AG04449 (cell line): ENCODE measurements at regions of chr1 and their contacts with region 1.

Region 1: DNA sequence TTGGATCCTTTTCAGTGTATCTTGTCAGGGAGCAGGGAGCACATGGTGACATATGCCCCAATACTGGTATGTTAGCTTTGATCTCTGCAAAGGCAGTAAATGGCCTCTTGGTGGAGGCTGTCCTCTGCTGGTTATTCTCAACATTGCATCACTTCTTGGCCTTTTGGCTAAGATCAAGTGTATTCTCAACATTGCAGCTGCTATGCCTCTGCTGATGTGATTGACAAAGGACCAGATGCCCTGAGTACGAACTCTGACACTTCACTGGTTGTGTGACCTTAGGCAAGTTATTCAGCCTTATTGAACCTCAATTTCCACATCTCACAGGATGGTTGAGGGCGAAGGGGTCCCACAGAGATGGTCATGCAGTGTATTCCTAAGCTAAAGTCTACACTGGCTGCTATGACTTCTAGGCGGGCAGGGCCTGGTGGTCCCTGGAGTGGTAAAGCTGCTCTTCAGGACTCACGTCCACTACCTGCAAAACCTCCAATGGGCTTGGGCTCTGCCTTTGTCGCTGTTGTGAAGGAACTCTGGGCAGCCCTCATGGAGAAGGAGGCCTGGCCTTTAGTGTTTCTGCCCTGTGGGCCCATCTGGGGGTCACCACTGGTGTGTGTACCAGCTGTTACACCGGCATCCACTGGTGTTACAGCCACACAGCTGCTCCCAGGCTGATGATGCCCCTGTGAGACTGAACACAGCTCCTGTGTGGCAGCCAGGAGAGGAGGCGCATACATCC is 64.8 kb downstream of the DNTTIP2 start:
- DNase-seq: no peak
- H3K4me3 ChIP-seq: no peak overlapping the region
- CTCF ChIP-seq: peak; percentile 93

Region 2: DNA sequence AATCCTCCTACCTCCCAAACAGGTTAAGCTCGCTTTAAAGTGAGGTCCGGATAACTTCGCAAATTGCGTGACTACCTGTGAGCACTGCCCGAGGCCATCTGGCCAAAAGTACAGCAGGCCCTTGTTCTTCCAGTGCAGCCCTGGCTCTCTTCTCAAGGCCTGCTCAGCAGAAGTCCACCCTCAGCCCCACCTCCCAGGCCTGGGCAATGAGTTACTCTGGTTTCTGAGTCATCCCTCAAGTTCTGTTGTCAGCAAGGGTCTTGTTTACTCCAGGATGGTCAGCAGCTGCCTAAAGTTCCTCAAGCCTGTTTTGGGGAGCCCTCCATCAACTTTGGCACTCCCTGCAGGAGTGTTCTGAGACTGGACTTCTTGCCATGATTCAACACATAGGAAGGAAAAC is 234.3 kb before region 1 on chr1:
- CTCF ChIA-PET with region 1: interaction called, 13 read pairs
- POLR2A ChIA-PET with region 1: no interaction called
- DNase-seq: peak; percentile 64
- H3K4me3 ChIP-seq: no peak overlapping the region
- CTCF ChIP-seq: no peak

Region 3: GRCh38 chr1:93629099-93630059 is 184.8 kb before region 1 on chr1:
- CTCF ChIA-PET with region 1: interaction called, 437 read pairs
- POLR2A ChIA-PET with region 1: interaction called, 3 read pairs
- DNase-seq: no peak
- H3K4me3 ChIP-seq: no peak overlapping the region
- CTCF ChIP-seq: peak; percentile 70

Region 4: DNA sequence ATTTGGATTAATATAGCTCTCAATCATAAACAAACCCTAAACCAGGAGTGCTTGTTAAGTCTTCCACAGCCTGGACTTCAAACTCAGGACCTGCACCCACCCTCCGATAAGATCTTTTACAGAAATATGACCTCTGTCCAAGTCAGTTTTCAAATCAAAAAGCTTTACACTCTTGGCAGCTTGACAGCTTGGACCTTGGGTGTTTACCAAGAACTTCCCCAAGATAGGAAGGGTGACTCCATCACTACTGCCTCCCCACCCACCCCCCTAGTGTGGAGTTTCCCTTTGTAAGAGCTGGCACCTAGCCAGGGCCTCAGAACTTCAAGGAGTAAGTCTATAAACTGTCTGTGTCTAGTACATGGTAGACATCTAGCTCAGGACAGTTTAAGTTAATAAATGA is 142.2 kb before region 1 on chr1:
- CTCF ChIA-PET with region 1: interaction called, 159 read pairs
- POLR2A ChIA-PET with region 1: no interaction called
- DNase-seq: no peak
- H3K4me3 ChIP-seq: no peak overlapping the region
- CTCF ChIP-seq: no peak

Region 5: DNA sequence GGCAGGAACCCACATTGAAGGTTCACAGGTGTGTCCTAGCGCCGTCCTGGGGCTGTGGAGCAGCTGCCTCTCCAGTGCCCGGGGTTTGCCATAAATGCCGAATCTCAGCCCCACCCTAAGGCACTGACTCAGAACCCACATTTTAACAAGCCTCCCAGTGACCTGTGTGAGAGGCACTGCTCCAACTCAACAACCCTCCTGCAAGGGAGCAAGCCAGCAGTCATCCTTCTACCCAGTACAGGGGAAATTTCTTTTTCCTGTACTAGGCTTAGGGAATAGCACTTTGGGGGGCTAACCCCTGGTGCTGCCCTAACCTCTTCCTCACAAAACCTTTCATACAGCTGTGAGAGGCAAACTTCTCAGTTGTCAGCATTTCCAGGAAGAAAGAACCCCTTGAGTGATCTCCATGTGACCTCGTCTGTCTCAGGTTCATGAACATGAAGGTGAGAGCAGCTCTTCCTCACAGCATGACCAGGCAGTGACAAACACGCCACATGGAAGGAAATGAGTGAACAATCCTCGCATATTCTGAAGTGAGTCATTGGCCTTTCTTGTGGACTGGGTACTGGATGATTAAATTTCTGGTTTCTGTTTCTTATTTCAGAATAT is 121.1 kb before region 1 on chr1:
- CTCF ChIA-PET with region 1: interaction called, 18 read pairs
- POLR2A ChIA-PET with region 1: no interaction called
- DNase-seq: no peak
- H3K4me3 ChIP-seq: no peak overlapping the region; the same call in 1 of the 2 replicates
- CTCF ChIP-seq: no peak

Region 6: GRCh38 chr1:93740601-93741031 is 73.6 kb before region 1 on chr1:
- CTCF ChIA-PET with region 1: interaction called, 126 read pairs
- POLR2A ChIA-PET with region 1: interaction called, 10 read pairs
- DNase-seq: no peak
- H3K4me3 ChIP-seq: no peak overlapping the region
- CTCF ChIP-seq: no peak

Region 7: GRCh38 chr1:93827633-93828366 is 13.6 kb after region 1 on chr1:
- CTCF ChIA-PET with region 1: interaction called, 81 read pairs
- POLR2A ChIA-PET with region 1: no interaction called
- DNase-seq: no peak
- H3K4me3 ChIP-seq: no peak overlapping the region
- CTCF ChIP-seq: no peak

Region 8: DNA sequence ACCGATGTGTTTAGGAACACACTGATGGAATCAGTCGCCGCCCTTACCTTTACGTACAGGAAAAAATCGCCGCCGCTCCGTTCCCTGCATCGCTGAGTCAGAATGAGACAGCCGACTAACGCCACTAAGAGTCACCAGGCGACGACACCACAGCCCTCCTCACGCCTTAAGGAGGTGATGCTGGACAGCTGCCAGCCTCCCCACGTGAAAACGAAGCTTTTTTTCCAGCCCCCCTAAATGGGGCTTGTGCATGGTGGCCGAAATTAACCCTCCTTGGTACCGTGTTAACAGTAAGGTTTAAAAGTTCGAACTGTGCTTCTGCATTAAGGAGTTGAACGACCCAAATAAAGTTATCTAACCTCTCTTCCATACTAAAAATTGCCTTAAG is 64.3 kb after region 1 on chr1:
- CTCF ChIA-PET with region 1: no interaction called
- POLR2A ChIA-PET with region 1: no interaction called
- DNase-seq: no peak
- H3K4me3 ChIP-seq: peak overlapping the region; percentile 94
- CTCF ChIP-seq: no peak

Region 9: DNA sequence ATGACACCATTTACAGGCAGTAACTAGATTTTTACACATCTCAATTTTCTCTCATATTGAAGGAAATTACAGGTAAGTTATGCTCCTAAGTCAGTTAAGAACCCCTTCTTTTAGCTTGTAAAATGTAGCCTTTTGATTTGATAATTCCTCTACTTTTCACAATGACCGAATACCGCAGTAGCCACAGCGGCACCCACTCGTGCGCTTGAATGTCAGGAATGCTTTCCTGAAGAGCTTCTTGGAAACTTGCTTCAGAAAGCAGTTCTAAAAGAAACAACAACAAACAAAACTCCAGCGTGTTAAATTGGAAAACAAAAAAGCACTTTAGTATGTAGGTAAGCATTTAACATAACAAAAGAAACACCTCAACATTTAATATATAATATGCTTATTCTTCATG is 74.7 kb after region 1 on chr1:
- CTCF ChIA-PET with region 1: no interaction called
- POLR2A ChIA-PET with region 1: no interaction called
- DNase-seq: no peak
- H3K4me3 ChIP-seq: no peak overlapping the region
- CTCF ChIP-seq: no peak

Region 10: DNA sequence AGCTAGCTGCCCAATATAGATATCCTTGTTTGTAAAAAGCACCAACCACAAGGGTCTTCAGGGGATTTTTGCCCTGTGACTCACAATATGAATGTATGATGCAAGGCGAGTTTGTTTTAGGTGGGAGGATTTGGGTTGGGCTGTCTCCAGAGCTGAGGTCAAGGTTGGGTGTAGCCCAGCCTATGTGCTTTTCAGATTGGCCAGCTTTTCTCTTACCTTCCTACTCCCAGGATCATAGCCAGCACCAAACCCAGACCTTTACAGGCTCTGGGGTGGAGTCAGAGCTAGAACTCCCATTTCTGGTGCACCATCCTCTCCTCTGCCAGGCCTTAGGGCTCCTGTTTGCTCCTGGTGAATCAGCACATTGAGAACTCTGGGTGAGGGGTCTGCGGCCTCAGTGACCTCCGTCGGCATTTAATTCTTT is 150.6 kb after region 1 on chr1:
- CTCF ChIA-PET with region 1: no interaction called
- POLR2A ChIA-PET with region 1: no interaction called
- DNase-seq: no peak
- H3K4me3 ChIP-seq: no peak overlapping the region
- CTCF ChIP-seq: no peak